Colonic mucosa (tissue), 4 donors: ENCODE measurements at regions of chr3 and their contacts with region 1.

Region 1: GRCh38 chr3:43540624-43541023 is 81.2 kb downstream of the ANO10 start:
- DNase-seq: no peak
- H3K4me3 ChIP-seq: no peak overlapping the region
- H3K27ac ChIP-seq: no peak overlapping the region
- H3K4me1 ChIP-seq: no peaks in the 10 kb centered on the region
- H3K27me3 ChIP-seq: no peaks in the 10 kb centered on the region
- CTCF ChIP-seq: no peak

Region 2: GRCh38 chr3:43638594-43639447 is 98.2 kb after region 1 on chr3:
- intact Hi-C with region 1: loop called (anchors 5 kb)
- DNase-seq: peak; percentile 70
- H3K4me3 ChIP-seq: no peak overlapping the region
- H3K27ac ChIP-seq: no peak overlapping the region
- H3K4me1 ChIP-seq: no peaks in the 10 kb centered on the region
- H3K27me3 ChIP-seq: no peaks in the 10 kb centered on the region
- CTCF ChIP-seq: peak; percentile 41

Region 3: DNA sequence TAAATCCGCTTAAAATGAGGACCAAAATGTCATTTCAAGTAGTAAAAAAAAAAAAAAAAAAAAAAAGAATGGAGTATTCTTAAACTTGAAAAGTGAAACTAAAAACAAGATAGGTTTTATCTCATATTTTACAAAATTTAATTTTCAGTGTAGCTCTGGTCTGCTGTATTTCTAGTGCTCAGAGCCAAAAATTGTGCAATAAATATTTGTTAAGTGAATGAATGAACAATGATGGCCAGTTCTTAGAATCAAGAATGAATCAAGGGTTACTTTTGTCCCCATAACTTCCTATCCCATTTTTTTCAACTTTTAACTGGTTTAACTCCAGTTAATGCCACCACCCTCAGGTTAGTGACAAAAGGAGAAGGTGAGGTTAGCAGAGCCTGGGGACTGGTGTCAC is 364.5 kb after region 1 on chr3:
- intact Hi-C with region 1: no loop called
- DNase-seq: no peak
- H3K4me3 ChIP-seq: no peak overlapping the region
- H3K27ac ChIP-seq: no peak overlapping the region
- H3K4me1 ChIP-seq: no peaks in the 10 kb centered on the region
- H3K27me3 ChIP-seq: no peaks in the 10 kb centered on the region
- CTCF ChIP-seq: no peak